ENCODE measurements at regions of chr11 and their contacts with region 1.

Region 1: GRCh38 chr11:11036848-11037732 is 179.2 kb upstream of the ZBED5 start:
- DNase-seq: no peak
- ATAC-seq: peak; percentile 92
- H3K4me3 ChIP-seq: no peak overlapping the region
- H3K27ac ChIP-seq: no peak overlapping the region
- H3K4me1 ChIP-seq: no peaks in the 10 kb centered on the region
- H3K27me3 ChIP-seq: no peaks in the 10 kb centered on the region
- CTCF ChIP-seq: peak; percentile 69 to 81 (median 73)
- EP300 ChIP-seq: no peak
- POLR2A ChIP-seq: no peak
- RAD21 ChIP-seq: peak; percentile 78

Region 2: DNA sequence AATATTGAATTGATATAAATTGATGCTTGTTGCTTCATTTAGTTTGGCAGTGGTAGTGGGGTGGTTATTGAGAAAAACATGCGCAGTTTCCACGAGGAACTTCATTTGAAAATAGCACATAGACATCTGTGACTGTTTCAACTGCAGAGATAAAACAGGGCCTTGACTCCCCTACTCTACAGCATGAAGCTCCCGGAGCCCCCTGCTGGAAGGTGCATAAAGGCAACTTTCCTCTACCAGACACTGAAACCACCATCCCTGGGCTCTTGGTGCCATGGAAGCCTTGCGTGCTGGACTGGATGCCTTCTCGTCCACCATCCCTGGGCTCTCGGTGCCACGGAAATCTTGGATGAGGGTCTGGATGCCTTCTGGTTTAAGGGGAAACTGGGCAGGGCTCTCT is 120.1 kb after region 1 on chr11:
- CTCF ChIA-PET with region 1: interaction called, 24 read pairs
- POLR2A ChIA-PET with region 1: no interaction called
- RAD21 ChIA-PET with region 1: interaction called, 6 read pairs
- SMC1A ChIA-PET with region 1: interaction called, 5 read pairs
- in situ Hi-C with region 1: no loop called
- intact Hi-C with region 1: loop called (anchors 5 kb)
- DNase-seq: no peak
- ATAC-seq: peak; percentile 73
- H3K4me3 ChIP-seq: no peak overlapping the region
- H3K27ac ChIP-seq: no peak overlapping the region
- H3K4me1 ChIP-seq: no peaks in the 10 kb centered on the region
- H3K27me3 ChIP-seq: no peaks in the 10 kb centered on the region; a peak in 1 of 4 replicates
- CTCF ChIP-seq: peak; percentile 30 to 52 (median 37); a peak in 5 of 6 replicates
- EP300 ChIP-seq: no peak
- POLR2A ChIP-seq: no peak
- RAD21 ChIP-seq: peak; percentile 40

Region 3: GRCh38 chr11:11207428-11207827 is 170.3 kb after region 1 on chr11:
- CTCF ChIA-PET with region 1: interaction called, 10 read pairs
- POLR2A ChIA-PET with region 1: no interaction called
- RAD21 ChIA-PET with region 1: interaction called, 4 read pairs
- SMC1A ChIA-PET with region 1: interaction called, 3 read pairs
- in situ Hi-C with region 1: no loop called
- intact Hi-C with region 1: loop called (anchors 5 kb)
- DNase-seq: no peak
- ATAC-seq: no peak
- H3K4me3 ChIP-seq: no peak overlapping the region
- H3K27ac ChIP-seq: no peak overlapping the region
- H3K4me1 ChIP-seq: no peaks in the 10 kb centered on the region
- H3K27me3 ChIP-seq: peaks cover 0 to 5% of the 10 kb centered on the region in 2 experiments; a peak in 3 of 4 replicates
- CTCF ChIP-seq: peak in 1 of 3 experiments; percentile 17; a peak in 1 of 6 replicates
- EP300 ChIP-seq: no peak
- POLR2A ChIP-seq: no peak
- RAD21 ChIP-seq: peak; percentile 47

Region 4: DNA sequence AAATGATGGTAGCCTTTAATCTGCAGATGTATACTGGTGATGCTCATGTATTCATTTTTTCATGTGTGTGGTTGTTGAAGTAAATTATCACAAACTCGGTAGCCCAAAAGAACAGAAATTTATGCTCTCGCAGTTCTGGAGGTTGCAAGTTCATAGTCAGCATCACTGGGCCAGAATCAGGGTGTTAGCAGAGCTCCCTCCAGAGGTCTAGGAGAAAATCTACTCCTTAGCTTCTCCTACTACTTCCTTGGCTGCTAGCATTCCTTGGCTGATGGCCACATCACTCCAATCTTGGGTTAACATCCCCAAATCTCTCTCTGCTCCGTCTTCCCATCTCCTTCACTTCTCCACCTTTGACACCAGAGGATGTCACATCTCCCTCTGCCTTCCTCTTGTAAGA is 630.0 kb after region 1 on chr11:
- CTCF ChIA-PET with region 1: no interaction called
- POLR2A ChIA-PET with region 1: no interaction called
- RAD21 ChIA-PET with region 1: no interaction called
- SMC1A ChIA-PET with region 1: no interaction called
- in situ Hi-C with region 1: no loop called
- intact Hi-C with region 1: loop called (anchors 5 kb)
- DNase-seq: no peak
- ATAC-seq: no peak
- H3K4me3 ChIP-seq: no peak overlapping the region
- H3K27ac ChIP-seq: no peak overlapping the region
- H3K4me1 ChIP-seq: peaks cover 3% of the 10 kb centered on the region; the same call in 1 of the 2 replicates
- H3K27me3 ChIP-seq: peaks cover 0 to 8% of the 10 kb centered on the region in 2 experiments; a peak in 2 of 4 replicates
- CTCF ChIP-seq: peak in 2 of 3 experiments; percentile 16 to 19; a peak in 2 of 6 replicates
- EP300 ChIP-seq: no peak
- POLR2A ChIP-seq: no peak
- RAD21 ChIP-seq: no peak

Measured in GM12878 (cell line).